ENCODE measurements at regions of chr22 and their contacts with region 1.

Region 1: DNA sequence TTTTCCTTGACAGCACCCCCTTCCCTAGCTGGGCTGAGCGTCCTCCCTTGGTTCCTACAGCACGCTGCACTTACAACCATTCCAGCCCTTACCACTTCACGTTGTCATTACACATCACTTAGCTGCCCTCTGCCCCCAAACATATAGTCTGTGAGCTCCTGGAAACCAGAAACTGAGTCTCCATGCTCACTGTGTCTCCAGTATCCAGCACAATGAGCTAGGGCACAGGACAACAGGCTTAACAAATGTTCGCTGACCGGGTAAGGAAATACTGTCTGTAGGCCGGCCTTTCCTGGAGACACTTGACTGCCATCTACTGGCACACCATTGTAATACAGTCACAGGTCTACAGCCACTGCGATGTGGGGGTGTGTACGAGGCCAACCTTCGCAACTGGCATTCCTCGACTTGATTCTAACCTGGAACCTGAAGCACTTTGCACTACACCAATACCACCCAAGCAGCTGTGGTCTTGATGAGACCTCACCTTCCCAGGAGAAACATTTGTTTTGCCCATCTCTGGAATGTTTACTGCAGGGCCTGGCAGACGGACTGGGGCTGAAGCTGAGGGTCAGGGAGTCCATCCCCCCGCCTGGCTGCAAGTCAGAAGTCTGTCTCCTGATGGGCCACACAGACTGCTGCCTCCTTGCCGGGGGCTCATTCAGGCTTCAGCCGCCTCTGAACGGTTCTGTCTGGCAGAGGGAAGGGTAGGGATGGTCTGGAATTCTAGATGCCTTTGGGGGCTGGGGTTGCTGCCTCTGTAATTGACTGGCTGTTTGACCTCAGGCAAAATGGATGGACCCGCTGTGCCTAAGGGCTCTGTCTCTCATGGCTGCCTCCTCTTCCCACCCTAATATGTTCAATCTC is 72.0 kb downstream of the SYN3 start:
- DNase-seq: peak; percentile 36 to 86
- H3K4me3 ChIP-seq: no peak overlapping the region
- H3K27ac ChIP-seq: no peak overlapping the region
- H3K4me1 ChIP-seq: peaks cover 3 to 14% (median 8%) of the 10 kb centered on the region in 4 experiments; a peak in 5 of 7 replicates
- H3K27me3 ChIP-seq: no peaks in the 10 kb centered on the region
- CTCF ChIP-seq: peak; percentile 80 to 94 (median 82)
- EP300 ChIP-seq: no peak
- POLR2A ChIP-seq: no peak
- RAD21 ChIP-seq: peak; percentile 84 to 86

Region 2: DNA sequence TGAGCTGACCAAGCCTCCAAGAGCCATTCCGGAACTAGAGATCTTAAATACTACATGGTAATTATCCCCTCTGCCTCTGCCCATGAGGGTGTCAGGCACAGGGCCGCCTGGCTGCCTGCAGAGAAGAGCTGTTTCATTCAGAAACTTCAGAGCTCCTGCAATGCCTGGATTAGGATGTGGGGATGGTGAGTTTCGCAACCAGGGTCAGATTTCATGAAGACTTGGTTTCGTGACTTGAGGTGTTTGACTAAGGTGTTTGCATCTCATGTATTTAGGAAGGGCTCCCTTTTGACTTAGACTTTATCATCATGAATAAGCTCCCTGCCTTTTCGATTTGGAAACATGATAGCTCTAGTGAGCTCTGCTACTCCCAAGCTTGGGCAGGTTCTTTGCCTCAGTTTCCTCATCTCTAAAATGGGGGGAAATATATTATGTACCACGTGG is 175.5 kb before region 1 on chr22:
- CTCF ChIA-PET with region 1: interaction called, 10 read pairs
- POLR2A ChIA-PET with region 1: no interaction called
- DNase-seq: no peak
- H3K4me3 ChIP-seq: no peak overlapping the region
- H3K27ac ChIP-seq: no peak overlapping the region
- H3K4me1 ChIP-seq: peaks cover 0 to 4% (median 2%) of the 10 kb centered on the region in 4 experiments; a peak in 4 of 7 replicates
- H3K27me3 ChIP-seq: no peaks in the 10 kb centered on the region; a peak in 1 of 7 replicates
- CTCF ChIP-seq: no peak
- EP300 ChIP-seq: no peak
- POLR2A ChIP-seq: no peak
- RAD21 ChIP-seq: no peak

Region 3: GRCh38 chr22:32920032-32920628 is 66.0 kb before region 1 on chr22:
- CTCF ChIA-PET with region 1: interaction called, 11 read pairs
- POLR2A ChIA-PET with region 1: interaction called, 4 read pairs
- DNase-seq: no peak
- H3K4me3 ChIP-seq: no peak overlapping the region
- H3K27ac ChIP-seq: no peak overlapping the region
- H3K4me1 ChIP-seq: peaks cover 0 to 5% (median 1%) of the 10 kb centered on the region in 4 experiments; a peak in 1 of 7 replicates
- H3K27me3 ChIP-seq: no peaks in the 10 kb centered on the region
- CTCF ChIP-seq: no peak
- EP300 ChIP-seq: no peak
- POLR2A ChIP-seq: no peak
- RAD21 ChIP-seq: no peak

Region 4: DNA sequence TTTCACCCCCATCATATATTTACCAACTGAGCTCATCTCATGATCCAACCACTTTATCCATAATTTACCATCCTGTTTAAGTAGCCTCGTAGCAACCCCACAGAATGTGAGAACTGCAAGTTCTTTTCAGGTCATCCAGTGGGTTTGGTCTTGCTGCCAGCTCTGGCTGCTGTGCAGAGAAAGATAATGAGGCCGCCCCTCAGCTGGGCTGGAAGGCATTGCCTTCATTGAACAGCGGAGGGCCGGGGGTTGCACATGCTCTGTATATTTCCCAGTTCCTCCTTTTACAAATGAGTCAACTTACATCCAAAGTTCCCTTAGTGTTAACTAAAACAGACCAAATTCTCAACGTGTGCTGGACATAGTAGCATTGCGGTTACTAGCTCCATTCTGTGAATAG is 24.6 kb before region 1 on chr22:
- CTCF ChIA-PET with region 1: interaction called, 15 read pairs
- POLR2A ChIA-PET with region 1: interaction called, 3 read pairs
- DNase-seq: no peak
- H3K4me3 ChIP-seq: no peak overlapping the region
- H3K27ac ChIP-seq: no peak overlapping the region
- H3K4me1 ChIP-seq: peaks cover 0 to 5% (median 2%) of the 10 kb centered on the region in 4 experiments; a peak in 1 of 7 replicates
- H3K27me3 ChIP-seq: no peaks in the 10 kb centered on the region
- CTCF ChIP-seq: no peak
- EP300 ChIP-seq: no peak
- POLR2A ChIP-seq: no peak
- RAD21 ChIP-seq: no peak

Region 5: DNA sequence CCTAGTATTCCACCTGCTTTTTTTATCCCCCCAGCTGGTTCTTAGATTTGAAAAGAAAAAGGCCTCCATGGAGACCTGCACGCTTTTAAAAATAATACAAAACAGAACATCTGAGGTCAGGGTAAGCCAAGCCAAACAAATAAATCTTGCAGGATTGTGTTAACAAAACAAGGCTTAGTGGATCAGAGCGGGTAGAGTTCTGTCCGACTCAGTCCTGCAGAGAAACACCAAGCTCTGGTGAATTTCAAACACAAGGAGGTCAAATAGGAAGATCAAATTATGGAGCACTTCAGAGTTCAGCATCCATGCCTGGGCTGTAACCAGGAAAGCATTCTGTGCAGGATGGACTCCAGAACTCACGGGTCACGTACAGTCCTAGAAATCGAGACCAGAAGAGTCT is 14.9 kb before region 1 on chr22:
- CTCF ChIA-PET with region 1: interaction called, 19 read pairs
- POLR2A ChIA-PET with region 1: interaction called, 10 read pairs
- DNase-seq: no peak
- H3K4me3 ChIP-seq: no peak overlapping the region
- H3K27ac ChIP-seq: no peak overlapping the region
- H3K4me1 ChIP-seq: no peaks in the 10 kb centered on the region
- H3K27me3 ChIP-seq: no peaks in the 10 kb centered on the region
- CTCF ChIP-seq: no peak
- EP300 ChIP-seq: no peak
- POLR2A ChIP-seq: no peak
- RAD21 ChIP-seq: no peak

Region 6: GRCh38 chr22:33000342-33001280 is 14.5 kb after region 1 on chr22:
- CTCF ChIA-PET with region 1: interaction called, 44 read pairs
- POLR2A ChIA-PET with region 1: interaction called, 3 read pairs
- DNase-seq: peak; percentile 74 to 92
- H3K4me3 ChIP-seq: peak overlapping the region in 1 of 4 experiments; percentile 30; a peak in 3 of 8 replicates
- H3K27ac ChIP-seq: no peak overlapping the region
- H3K4me1 ChIP-seq: peaks cover 0 to 9% (median 3%) of the 10 kb centered on the region in 4 experiments; a peak in 4 of 7 replicates
- H3K27me3 ChIP-seq: no peaks in the 10 kb centered on the region
- CTCF ChIP-seq: peak; percentile 92 to 98 (median 96)
- EP300 ChIP-seq: no peak
- POLR2A ChIP-seq: no peak
- RAD21 ChIP-seq: peak; percentile 91 to 95

Region 7: GRCh38 chr22:33049119-33049729 is 63.1 kb after region 1 on chr22:
- CTCF ChIA-PET with region 1: interaction called, 10 read pairs
- POLR2A ChIA-PET with region 1: no interaction called
- DNase-seq: peak in 1 of 2 experiments; percentile 83
- H3K4me3 ChIP-seq: no peak overlapping the region
- H3K27ac ChIP-seq: no peak overlapping the region; the same call in 1 of the 2 replicates
- H3K4me1 ChIP-seq: peaks cover 11 to 33% (median 28%) of the 10 kb centered on the region in 4 experiments
- H3K27me3 ChIP-seq: no peaks in the 10 kb centered on the region; a peak in 1 of 7 replicates
- CTCF ChIP-seq: peak; percentile 85 to 94 (median 87)
- EP300 ChIP-seq: no peak
- POLR2A ChIP-seq: no peak
- RAD21 ChIP-seq: peak; percentile 72 to 79

Region 8: DNA sequence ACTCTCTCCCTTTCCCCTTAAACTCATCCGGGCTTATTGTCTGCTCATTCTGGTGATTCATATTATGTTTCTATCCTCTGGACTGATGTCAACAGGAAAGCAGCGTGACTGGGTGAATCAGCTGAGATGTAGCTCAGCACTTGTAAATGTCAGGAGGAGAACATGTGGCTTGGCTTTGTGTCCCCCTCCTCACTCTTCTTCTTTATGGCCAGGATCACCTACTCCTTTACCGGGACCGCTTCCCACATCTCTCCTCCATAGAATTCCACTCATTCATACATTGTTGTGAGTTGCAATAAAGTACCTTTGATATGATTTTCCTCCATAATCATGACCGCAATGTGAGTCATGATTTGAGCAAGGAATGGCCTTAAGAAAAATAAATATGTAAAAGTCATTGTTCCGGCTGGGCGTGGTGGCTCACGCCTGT is 87.9 kb after region 1 on chr22:
- CTCF ChIA-PET with region 1: no interaction called
- POLR2A ChIA-PET with region 1: no interaction called
- DNase-seq: no peak
- H3K4me3 ChIP-seq: no peak overlapping the region
- H3K27ac ChIP-seq: no peak overlapping the region
- H3K4me1 ChIP-seq: no peaks in the 10 kb centered on the region
- H3K27me3 ChIP-seq: no peaks in the 10 kb centered on the region; a peak in 1 of 7 replicates
- CTCF ChIP-seq: no peak
- EP300 ChIP-seq: no peak
- POLR2A ChIP-seq: no peak
- RAD21 ChIP-seq: no peak